HEK293 (cell line): ENCODE measurements at regions of chr9 and their contacts with region 1.

Region 1: DNA sequence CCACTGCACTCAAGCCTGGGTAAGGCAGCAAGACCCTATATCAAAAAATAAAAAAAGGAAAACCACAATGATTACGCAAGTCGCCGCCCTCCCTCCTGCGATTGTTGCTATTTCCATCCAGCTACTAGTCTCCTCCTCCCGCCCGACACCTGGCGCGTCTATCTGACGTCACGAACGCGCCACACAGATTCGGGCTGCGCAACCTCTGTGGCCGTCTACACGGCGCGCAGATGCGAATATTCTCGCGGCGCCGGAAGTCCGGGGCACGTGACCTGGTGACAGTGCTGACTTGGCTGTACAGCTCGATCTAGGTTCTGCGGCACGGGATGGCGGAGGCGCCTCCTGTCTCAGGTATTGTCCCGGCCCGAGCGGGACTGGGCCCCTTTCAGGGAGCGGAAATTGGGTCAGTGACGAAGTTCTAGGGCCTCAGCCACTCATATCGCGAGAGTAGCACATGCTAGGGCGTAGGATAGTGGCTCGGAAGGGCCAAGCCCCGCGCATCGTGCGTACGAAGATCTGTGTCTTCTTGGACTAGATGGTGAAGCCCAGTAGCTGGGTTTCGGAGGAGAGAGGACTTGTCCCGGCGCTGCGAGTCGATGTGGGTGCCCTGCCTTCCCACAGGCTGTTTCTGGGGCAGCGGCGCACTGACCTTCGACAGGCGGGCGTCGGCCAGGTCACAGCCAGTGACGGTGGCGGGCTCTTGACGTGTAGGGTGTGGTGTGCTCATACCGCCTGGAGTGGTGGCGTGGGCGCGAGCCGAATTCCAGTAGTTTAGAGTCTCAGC is at the start of gene NFX1:
- H3K4me3 ChIP-seq: peak within 1 kb of the TSS; percentile 84
- H3K27ac ChIP-seq: peak within 1 kb of the TSS; percentile 87
- H3K4me1 ChIP-seq: no peaks in the 10 kb centered on the region
- CTCF ChIP-seq: no peak

Region 2: GRCh38 chr9:33111631-33112030 is 178.8 kb before region 1 on chr9:
- CTCF ChIA-PET with region 1: no interaction called
- POLR2A ChIA-PET with region 1: interaction called, 10 read pairs
- H3K4me3 ChIP-seq: no peak overlapping the region
- H3K27ac ChIP-seq: no peak overlapping the region
- H3K4me1 ChIP-seq: no peaks in the 10 kb centered on the region
- CTCF ChIP-seq: no peak

Region 3: GRCh38 chr9:33264473-33265177 is 25.8 kb before region 1 on chr9 and contains the starts of genes BAG1 and CHMP5:
- CTCF ChIA-PET with region 1: interaction called, 6 read pairs
- POLR2A ChIA-PET with region 1: interaction called, 11 read pairs
- H3K4me3 ChIP-seq: peak within 1 kb of the TSS; percentile 90
- H3K27ac ChIP-seq: peak within 1 kb of the TSS; percentile 77; the same call in 1 of the 2 replicates
- H3K4me1 ChIP-seq: peaks cover 3% of the 10 kb centered on the region; the same call in 1 of the 2 replicates
- CTCF ChIP-seq: no peak; the same call in 1 of the 2 replicates

Region 4: DNA sequence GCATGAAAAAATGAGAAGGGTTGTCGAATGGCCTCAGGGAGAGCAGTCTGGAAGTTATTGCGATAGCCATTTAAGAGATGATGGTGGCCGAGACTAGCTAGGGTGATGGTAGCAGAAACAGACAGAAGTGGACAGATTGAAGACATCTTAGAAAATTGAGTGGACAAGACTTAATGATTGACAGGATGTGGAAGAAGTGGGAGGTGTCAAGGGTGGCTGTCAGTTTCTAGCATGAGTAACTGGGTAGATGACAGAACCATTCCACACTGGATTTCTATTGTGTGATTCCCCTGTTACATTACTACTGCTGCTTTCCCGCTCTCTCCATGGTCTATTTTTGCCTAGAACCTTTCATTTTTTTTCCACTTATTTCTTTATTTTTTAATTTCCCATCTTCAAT is 13.0 kb before region 1 on chr9:
- CTCF ChIA-PET with region 1: interaction called, 11 read pairs
- POLR2A ChIA-PET with region 1: interaction called, 7 read pairs
- H3K4me3 ChIP-seq: no peak overlapping the region
- H3K27ac ChIP-seq: no peak overlapping the region
- H3K4me1 ChIP-seq: no peaks in the 10 kb centered on the region
- CTCF ChIP-seq: no peak